Naive thymus-derived CD8-positive, alpha-beta T cell (primary cell): ENCODE measurements at regions of chr17 and their contacts with region 1.

Region 1: DNA sequence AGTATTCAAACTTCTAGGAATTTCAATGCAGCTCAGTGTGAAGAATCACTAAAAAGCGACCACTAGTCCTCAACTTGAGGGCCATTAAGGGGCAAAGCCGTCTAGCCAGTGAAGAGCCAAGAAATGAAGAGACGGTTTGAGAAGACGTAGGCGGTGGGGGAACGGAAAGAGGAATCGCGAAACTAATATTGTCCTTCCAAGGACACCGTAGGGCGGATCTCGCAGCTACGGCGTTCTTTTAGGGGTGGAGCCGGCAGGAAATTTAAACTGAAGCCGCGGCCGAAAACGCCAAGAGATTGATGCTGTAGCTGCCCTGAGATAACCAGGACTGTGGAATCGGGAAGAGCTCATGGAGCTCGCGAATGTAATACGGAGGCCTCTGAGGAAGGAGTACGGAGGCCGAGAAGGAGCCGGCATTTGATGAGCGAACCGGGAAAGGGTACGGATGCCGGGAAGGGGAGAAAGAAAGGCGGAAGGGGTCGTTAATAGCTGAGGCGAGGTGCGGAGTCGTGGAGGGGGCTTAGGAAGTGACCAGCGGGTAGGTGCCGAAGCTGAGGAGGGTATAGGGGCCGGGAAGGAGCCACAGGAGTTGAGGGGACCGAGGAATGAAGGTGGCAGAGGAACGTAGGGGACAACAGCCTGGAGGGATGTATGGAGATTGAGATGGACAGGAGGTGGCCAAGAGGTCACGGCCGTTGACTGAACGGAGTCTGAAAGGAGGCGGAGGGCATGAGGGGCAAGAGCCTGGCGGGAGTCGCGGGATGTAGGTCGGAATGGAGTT is at the start of gene DBF4B:
- DNase-seq: peak; percentile 64 to 93 (median 85)
- ATAC-seq: peak; percentile 95 to 97
- H3K4me3 Mint-ChIP-seq: no peak within 1 kb of the TSS
- H3K27ac Mint-ChIP-seq: peak within 1 kb of the TSS in 2 of 10 donors; percentile 31 to 71
- H3K4me1 Mint-ChIP-seq: peaks cover 0 to 3% (median 3%) of the 10 kb centered on the region in 4 donors
- H3K27me3 Mint-ChIP-seq: peaks cover 0 to 4% (median 2%) of the 10 kb centered on the region in 5 donors
- polyA plus RNA-seq, gene DBF4B: 0.55 to 1.2 (median 0.61) TPM

Region 2: DNA sequence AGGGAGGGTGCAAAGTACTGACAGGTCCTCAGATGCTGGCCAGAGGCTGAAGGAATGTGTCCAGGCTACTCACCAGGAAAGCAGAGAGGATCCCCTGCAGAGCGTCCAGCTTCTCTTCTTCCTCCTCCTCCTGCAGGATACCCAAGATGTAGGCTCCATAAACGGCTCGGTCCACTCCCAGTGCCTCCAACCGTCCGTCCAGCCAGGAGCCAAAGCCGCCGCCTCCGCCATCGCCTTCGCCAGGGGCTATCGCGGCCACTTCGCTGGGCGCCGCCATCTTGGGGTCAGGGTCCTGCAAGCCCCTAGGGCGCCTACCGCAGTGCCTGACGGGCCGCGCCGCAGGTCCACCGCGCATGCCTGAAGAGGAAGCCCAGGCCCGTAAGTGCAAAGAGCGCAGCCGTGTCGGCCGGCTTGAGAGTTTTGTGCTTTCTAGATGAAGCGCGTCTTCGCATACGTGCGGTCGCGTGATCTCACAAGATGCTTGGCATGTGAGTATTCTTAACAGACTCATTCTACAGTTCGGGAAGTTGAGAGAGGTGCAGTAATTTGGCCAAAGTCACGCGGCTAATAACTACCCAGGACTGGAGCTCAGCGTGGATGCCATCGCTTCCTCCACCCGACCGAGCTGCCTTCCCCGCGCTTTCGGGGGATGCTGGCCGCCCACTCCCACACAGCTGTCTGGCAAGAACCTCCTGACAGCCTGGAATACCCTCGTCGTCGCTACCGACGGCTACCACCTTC is 18.9 kb before region 1 on chr17 and contains the start of gene CCDC43:
- POLR2A ChIA-PET with region 1: interaction called, 17 read pairs
- DNase-seq: peak; percentile 86 to 94 (median 92)
- ATAC-seq: peak; percentile 98 to 99
- H3K4me3 Mint-ChIP-seq: peak within 1 kb of the TSS; percentile 92 to 99 (median 97)
- H3K27ac Mint-ChIP-seq: peak within 1 kb of the TSS; percentile 97 to 99 (median 98)
- H3K4me1 Mint-ChIP-seq: peaks cover 12 to 48% (median 27%) of the 10 kb centered on the region in 4 donors
- H3K27me3 Mint-ChIP-seq: no peaks in the 10 kb centered on the region
- polyA plus RNA-seq, gene CCDC43: 9.6 to 12.6 (median 11.4) TPM